ENCODE measurements at regions of chr6 and their contacts with region 1.

Region 1: GRCh38 chr6:43181942-43182860 is at the start of gene CUL9:
- DNase-seq: peak in 1 of 2 experiments; percentile 90
- H3K4me3 ChIP-seq: peak within 1 kb of the TSS; percentile 54 to 86 (median 80)
- H3K27ac ChIP-seq: peak within 1 kb of the TSS; percentile 68
- H3K4me1 ChIP-seq: peaks cover 0 to 3% (median 1%) of the 10 kb centered on the region in 4 experiments; a peak in 1 of 7 replicates
- H3K27me3 ChIP-seq: no peaks in the 10 kb centered on the region
- CTCF ChIP-seq: no peak
- EP300 ChIP-seq: 0 out of 3 replicates have a peak, but pooled peaks of 1 of the 2 experiments have one; percentile 16
- POLR2A ChIP-seq: peak in 1 of 2 experiments; percentile 92; a peak in 2 of 3 replicates
- RAD21 ChIP-seq: no peak
- total RNA-seq, gene CUL9: 9.8 and 10.5 TPM in 2 replicates

Region 2: DNA sequence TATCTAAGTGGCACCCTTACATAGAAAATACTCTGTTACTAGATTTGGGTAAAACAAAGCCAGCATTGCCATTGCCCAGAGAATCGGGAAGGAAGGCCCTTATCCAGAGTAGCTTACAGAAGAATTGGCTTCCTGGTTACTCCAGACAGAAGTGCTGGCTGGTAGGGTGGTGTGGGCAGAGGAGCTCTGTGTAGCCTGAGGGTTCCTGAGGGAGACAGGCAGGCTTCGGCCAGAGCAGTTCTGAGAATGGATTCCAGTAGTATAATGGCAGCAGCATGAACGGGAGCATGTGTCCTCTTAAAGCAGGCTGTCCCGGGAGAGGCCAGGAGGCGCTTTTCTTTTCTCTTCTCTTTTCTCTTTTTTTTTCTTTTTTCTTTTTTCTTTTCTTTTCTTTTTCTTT is 11.7 kb after region 1 on chr6:
- CTCF ChIA-PET with region 1: interaction called, 3 read pairs
- POLR2A ChIA-PET with region 1: interaction called, 19 read pairs
- DNase-seq: no peak
- H3K4me3 ChIP-seq: no peak overlapping the region
- H3K27ac ChIP-seq: no peak overlapping the region
- H3K4me1 ChIP-seq: no peaks in the 10 kb centered on the region
- H3K27me3 ChIP-seq: no peaks in the 10 kb centered on the region
- CTCF ChIP-seq: no peak
- EP300 ChIP-seq: no peak
- POLR2A ChIP-seq: no peak
- RAD21 ChIP-seq: no peak

Region 3: GRCh38 chr6:43202451-43202850 is 20.2 kb after region 1 on chr6:
- CTCF ChIA-PET with region 1: no interaction called
- POLR2A ChIA-PET with region 1: interaction called, 10 read pairs
- DNase-seq: no peak
- H3K4me3 ChIP-seq: no peak overlapping the region
- H3K27ac ChIP-seq: no peak overlapping the region
- H3K4me1 ChIP-seq: no peaks in the 10 kb centered on the region
- H3K27me3 ChIP-seq: no peaks in the 10 kb centered on the region
- CTCF ChIP-seq: no peak
- EP300 ChIP-seq: no peak
- POLR2A ChIP-seq: no peak
- RAD21 ChIP-seq: no peak

Measured in H1 (cell line).